IMR-90 (cell line): ENCODE measurements at regions of chr6 and their contacts with region 1.

Region 1: GRCh38 chr6:18264219-18264922 is at the start of gene DEK:
- DNase-seq: peak; percentile 81
- ATAC-seq: peak; percentile 86
- H3K4me3 ChIP-seq: peak within 1 kb of the TSS; percentile 98
- H3K27ac ChIP-seq: peak within 1 kb of the TSS; percentile 95
- H3K4me1 ChIP-seq: peaks cover 15% of the 10 kb centered on the region
- H3K27me3 ChIP-seq: no peaks in the 10 kb centered on the region; the same call in 1 of the 2 replicates
- CTCF ChIP-seq: peak; percentile 63
- POLR2A ChIP-seq: peak; percentile 65
- RAD21 ChIP-seq: peak; percentile 43
- total RNA-seq, gene DEK: 33.5 and 82.8 TPM in 2 replicates

Region 2: DNA sequence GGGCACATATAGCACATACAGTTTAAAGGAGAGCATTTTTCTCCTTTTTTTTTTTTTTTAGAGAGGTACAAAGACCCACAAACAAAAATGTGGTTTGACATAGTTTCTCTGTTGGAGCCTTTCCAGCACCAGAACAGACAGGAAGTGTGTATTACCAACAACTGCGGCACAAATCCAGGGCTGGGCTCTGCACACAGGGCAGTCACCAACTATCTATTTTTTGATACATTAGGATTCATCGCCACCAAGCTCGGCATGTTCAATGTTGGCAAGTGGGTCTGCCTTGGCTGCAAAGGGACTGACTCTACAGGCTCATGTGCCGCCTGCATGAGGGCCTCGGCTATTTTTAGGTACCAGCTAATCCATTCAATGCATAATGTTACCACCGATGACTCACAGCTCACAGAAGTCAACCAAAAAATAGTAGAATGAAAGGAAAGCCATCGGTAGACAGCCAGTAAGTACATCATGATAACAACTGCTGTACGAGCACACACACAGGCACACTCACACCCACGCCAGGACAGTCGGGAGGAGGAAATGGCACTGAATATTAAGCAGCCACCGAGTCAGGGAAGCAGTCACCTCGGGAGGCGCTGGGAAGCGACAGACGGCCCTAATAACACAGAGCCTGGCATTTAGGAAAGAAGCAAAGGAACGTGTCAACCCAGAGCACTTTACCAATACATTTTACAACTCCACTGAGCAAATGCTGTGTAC is 1944.4 kb before region 1 on chr6:
- CTCF ChIA-PET with region 1: no interaction called
- POLR2A ChIA-PET with region 1: no interaction called
- dilution Hi-C with region 1: no loop called
- in situ Hi-C with region 1: no loop called
- intact Hi-C with region 1: loop called (anchors 5 kb)
- DNase-seq: peak; percentile 98
- ATAC-seq: peak; percentile 52
- H3K4me3 ChIP-seq: no peak overlapping the region; the same call in 1 of the 2 replicates
- H3K27ac ChIP-seq: peak overlapping the region; percentile 65
- H3K4me1 ChIP-seq: peaks cover 24% of the 10 kb centered on the region
- H3K27me3 ChIP-seq: no peaks in the 10 kb centered on the region
- CTCF ChIP-seq: no peak
- POLR2A ChIP-seq: peak; percentile 62
- RAD21 ChIP-seq: 0 out of 2 replicates have a peak, but pooled peaks have one; percentile 1

Region 3: GRCh38 chr6:17987576-17988421 is 276.6 kb before region 1 on chr6 and contains the start of gene KIF13A:
- CTCF ChIA-PET with region 1: no interaction called
- POLR2A ChIA-PET with region 1: no interaction called
- dilution Hi-C with region 1: no loop called
- in situ Hi-C with region 1: no loop called
- intact Hi-C with region 1: loop called (anchors 10 kb)
- DNase-seq: peak; percentile 59
- ATAC-seq: peak; percentile 87
- H3K4me3 ChIP-seq: peak within 1 kb of the TSS; percentile 84
- H3K27ac ChIP-seq: peak within 1 kb of the TSS; percentile 85
- H3K4me1 ChIP-seq: peaks cover 10% of the 10 kb centered on the region
- H3K27me3 ChIP-seq: no peaks in the 10 kb centered on the region
- CTCF ChIP-seq: peak; percentile 41
- POLR2A ChIP-seq: no peak
- RAD21 ChIP-seq: peak; percentile 35
- total RNA-seq, gene KIF13A: 51.8 and 53.0 TPM in 2 replicates

Region 4: DNA sequence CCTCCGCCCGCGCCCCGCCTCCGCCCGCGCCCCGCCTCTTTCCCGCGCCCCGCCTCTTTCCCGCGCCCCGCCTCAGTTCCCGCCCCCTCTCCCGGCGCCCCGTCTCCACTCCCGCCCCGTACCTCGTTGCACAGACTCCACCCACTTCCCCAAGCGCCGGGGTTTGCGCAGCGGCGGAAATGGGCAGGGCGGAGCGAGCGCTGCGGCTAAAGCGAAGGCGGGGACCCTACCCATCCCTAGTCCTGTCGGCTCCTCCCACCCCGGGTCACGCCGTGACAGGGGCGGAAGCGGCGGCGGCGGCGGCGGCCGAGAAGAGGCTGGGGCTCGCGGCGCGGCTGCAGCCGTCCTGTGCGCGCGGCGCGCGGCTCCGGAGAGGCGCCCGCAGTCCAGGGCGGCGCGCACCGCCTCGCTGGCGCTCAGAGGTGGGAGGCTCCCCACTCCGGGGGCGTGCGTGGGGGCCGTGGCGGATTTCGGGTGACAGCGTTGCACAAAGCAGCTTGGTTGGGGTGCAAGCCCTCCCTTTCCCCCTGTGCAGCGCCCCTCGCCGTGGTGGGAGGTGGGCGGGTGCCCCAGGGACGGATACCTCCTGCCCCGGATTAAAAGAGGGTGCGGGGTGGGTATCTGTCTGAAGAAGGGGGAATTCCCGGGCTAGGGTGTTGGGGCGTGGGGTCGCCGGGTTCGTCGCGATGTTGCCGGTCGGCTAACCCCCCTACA is 109.1 kb before region 1 on chr6 and contains the start of gene KDM1B:
- CTCF ChIA-PET with region 1: no interaction called
- POLR2A ChIA-PET with region 1: no interaction called
- dilution Hi-C with region 1: no loop called
- in situ Hi-C with region 1: no loop called
- intact Hi-C with region 1: loop called (anchors 2 kb)
- DNase-seq: peak; percentile 98
- ATAC-seq: peak; percentile 98
- H3K4me3 ChIP-seq: peak within 1 kb of the TSS; percentile 99
- H3K27ac ChIP-seq: peak within 1 kb of the TSS; percentile 84
- H3K4me1 ChIP-seq: peaks cover 3% of the 10 kb centered on the region
- H3K27me3 ChIP-seq: no peaks in the 10 kb centered on the region
- CTCF ChIP-seq: no peak
- POLR2A ChIP-seq: peak; percentile 52; the same call in 1 of the 2 replicates
- RAD21 ChIP-seq: no peak
- total RNA-seq, gene KDM1B: 16.7 and 16.9 TPM in 2 replicates

Region 5: GRCh38 chr6:18221288-18221615 is 43.1 kb before region 1 on chr6:
- CTCF ChIA-PET with region 1: no interaction called
- POLR2A ChIA-PET with region 1: no interaction called
- dilution Hi-C with region 1: no loop called
- in situ Hi-C with region 1: no loop called
- intact Hi-C with region 1: loop called (anchors 5 kb)
- DNase-seq: no peak
- ATAC-seq: no peak
- H3K4me3 ChIP-seq: no peak overlapping the region
- H3K27ac ChIP-seq: no peak overlapping the region
- H3K4me1 ChIP-seq: peaks cover 2% of the 10 kb centered on the region; the same call in 1 of the 2 replicates
- H3K27me3 ChIP-seq: no peaks in the 10 kb centered on the region
- CTCF ChIP-seq: no peak
- POLR2A ChIP-seq: no peak
- RAD21 ChIP-seq: no peak

Region 6: DNA sequence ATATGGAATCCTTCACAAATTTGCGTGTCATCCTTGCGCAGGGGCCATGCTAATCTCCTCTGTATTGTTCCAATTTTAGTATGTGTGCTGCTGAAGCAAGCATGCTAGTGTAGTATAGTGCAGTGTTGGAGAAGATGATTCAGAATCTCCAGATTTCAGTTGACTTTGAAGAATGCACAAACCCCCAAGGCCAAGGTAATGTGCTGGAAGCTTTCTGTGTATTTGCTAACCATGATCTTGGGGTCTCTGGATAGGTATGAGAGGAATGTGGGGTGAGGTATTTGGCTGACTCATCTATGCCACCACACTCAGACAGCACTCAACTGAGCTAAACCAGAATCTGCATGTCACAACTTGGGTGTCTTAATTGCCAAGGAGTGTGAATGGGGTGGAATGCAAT is 42.6 kb after region 1 on chr6:
- CTCF ChIA-PET with region 1: no interaction called
- POLR2A ChIA-PET with region 1: no interaction called
- dilution Hi-C with region 1: no loop called
- in situ Hi-C with region 1: no loop called
- intact Hi-C with region 1: loop called (anchors 2 kb)
- DNase-seq: peak; percentile 48
- ATAC-seq: peak; percentile 52
- H3K4me3 ChIP-seq: no peak overlapping the region
- H3K27ac ChIP-seq: peak overlapping the region; percentile 35
- H3K4me1 ChIP-seq: peaks cover 13% of the 10 kb centered on the region
- H3K27me3 ChIP-seq: no peaks in the 10 kb centered on the region
- CTCF ChIP-seq: no peak
- POLR2A ChIP-seq: no peak
- RAD21 ChIP-seq: no peak